BJ (cell line): ENCODE measurements at regions of chr3 and their contacts with region 1.

Region 1: GRCh38 chr3:126522363-126522788 is 1.6 kb upstream of the CHST13 start:
- DNase-seq: no peak
- H3K4me3 ChIP-seq: no peak overlapping the region
- H3K27me3 ChIP-seq: peaks cover 15% of the 10 kb centered on the region
- CTCF ChIP-seq: peak; percentile 88

Region 2: GRCh38 chr3:126508539-126508938 is 13.8 kb before region 1 on chr3:
- CTCF ChIA-PET with region 1: interaction called, 14 read pairs
- POLR2A ChIA-PET with region 1: interaction called, 3 read pairs
- DNase-seq: no peak
- H3K4me3 ChIP-seq: no peak overlapping the region
- H3K27me3 ChIP-seq: peaks cover 3% of the 10 kb centered on the region
- CTCF ChIP-seq: no peak